ENCODE measurements at regions of chr3 and their contacts with region 1.

Region 1: GRCh38 chr3:172449466-172450149 is 1.4 kb upstream of the GHSR start:
- DNase-seq: peak; percentile 13
- H3K4me3 Mint-ChIP-seq: no peak overlapping the region
- H3K27ac Mint-ChIP-seq: no peak overlapping the region
- H3K4me1 Mint-ChIP-seq: peaks cover 24% of the 10 kb centered on the region
- H3K27me3 Mint-ChIP-seq: peaks cover 82% of the 10 kb centered on the region

Region 2: GRCh38 chr3:170584585-170585007 is 1865.0 kb before region 1 on chr3:
- intact Hi-C with region 1: loop called (anchors 10 kb)
- DNase-seq: peak; percentile 39
- H3K4me3 Mint-ChIP-seq: no peak overlapping the region
- H3K27ac Mint-ChIP-seq: no peak overlapping the region
- H3K4me1 Mint-ChIP-seq: peaks cover 3% of the 10 kb centered on the region
- H3K27me3 Mint-ChIP-seq: peaks cover 61% of the 10 kb centered on the region

Region 3: DNA sequence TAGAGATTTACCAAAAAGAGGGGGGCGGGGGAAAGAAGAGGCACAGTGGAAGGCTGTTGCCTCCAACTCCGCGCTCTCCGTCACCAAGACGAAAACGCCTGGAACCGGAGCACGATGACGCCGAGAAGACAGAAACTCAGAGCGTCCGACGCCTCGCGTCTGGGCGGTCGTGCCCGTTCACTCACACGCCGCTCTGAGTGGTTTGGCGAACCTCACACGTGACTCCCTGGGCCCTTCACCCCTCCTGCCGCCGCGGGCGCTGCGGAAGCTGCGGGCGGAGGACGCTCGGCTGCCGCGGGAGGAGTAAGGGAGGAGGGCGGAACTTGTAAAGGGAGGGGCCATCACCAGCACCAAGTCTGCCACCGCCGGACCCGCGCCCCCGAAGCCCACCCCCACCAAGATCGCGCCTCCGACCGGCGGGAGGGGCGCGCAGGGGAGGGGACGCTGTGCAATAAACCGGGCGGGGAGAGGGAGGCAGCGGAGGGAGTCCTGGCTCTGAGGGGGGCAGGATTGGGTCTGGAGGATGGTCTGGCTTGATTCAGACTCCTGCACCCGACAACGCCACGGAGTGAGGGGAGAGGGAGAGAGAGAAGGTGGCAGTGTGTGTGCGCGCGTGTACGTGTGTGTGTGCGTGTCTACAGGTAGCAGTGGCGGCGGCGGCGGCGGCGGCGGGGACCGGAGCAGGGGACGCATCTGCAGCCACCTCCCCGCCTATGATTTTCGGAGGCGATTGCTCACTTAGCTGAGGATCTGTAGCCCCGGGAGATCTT is 946.0 kb after region 1 on chr3:
- intact Hi-C with region 1: loop called (anchors 10 kb)
- DNase-seq: peak; percentile 64
- H3K4me3 Mint-ChIP-seq: peak overlapping the region; percentile 76
- H3K27ac Mint-ChIP-seq: no peak overlapping the region
- H3K4me1 Mint-ChIP-seq: peaks cover 27% of the 10 kb centered on the region
- H3K27me3 Mint-ChIP-seq: peaks cover 62% of the 10 kb centered on the region